IMR-90 (cell line): ENCODE measurements at regions of chr2 and their contacts with region 1.

Region 1: DNA sequence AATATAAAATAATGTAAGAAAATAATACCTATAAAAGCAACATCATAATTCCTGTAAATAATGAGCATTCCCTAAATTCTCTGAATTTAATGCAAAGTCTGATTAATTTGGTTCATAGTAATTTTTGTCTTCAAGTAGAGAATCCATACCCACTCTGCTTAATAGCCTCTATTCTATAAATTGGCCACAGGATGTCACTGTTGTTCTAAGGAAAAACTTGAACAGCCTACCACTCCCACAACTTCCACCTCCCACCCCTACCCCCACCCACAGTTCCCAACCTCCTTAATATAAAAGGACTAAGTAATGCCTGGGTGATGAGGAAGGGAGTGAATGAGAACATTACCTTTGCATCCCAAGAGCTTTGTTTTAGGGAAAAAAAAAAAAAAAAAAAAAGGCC is 27.2 kb upstream of the BBS5 start:
- DNase-seq: peak; percentile 58
- ATAC-seq: peak; percentile 87
- H3K4me3 ChIP-seq: no peak overlapping the region
- H3K27ac ChIP-seq: no peak overlapping the region
- H3K4me1 ChIP-seq: no peaks in the 10 kb centered on the region
- H3K27me3 ChIP-seq: peaks cover 2% of the 10 kb centered on the region; the same call in 1 of the 2 replicates
- CTCF ChIP-seq: peak; percentile 63
- POLR2A ChIP-seq: no peak
- RAD21 ChIP-seq: peak; percentile 76

Region 2: GRCh38 chr2:169415233-169415748 is 36.8 kb before region 1 on chr2:
- CTCF ChIA-PET with region 1: no interaction called
- POLR2A ChIA-PET with region 1: no interaction called
- dilution Hi-C with region 1: no loop called
- in situ Hi-C with region 1: no loop called
- intact Hi-C with region 1: no loop called
- DNase-seq: no peak
- ATAC-seq: no peak
- H3K4me3 ChIP-seq: no peak overlapping the region
- H3K27ac ChIP-seq: no peak overlapping the region
- H3K4me1 ChIP-seq: no peaks in the 10 kb centered on the region
- H3K27me3 ChIP-seq: no peaks in the 10 kb centered on the region; the same call in 1 of the 2 replicates
- CTCF ChIP-seq: no peak
- POLR2A ChIP-seq: no peak
- RAD21 ChIP-seq: no peak

Region 3: GRCh38 chr2:169619946-169620345 is 167.9 kb after region 1 on chr2:
- CTCF ChIA-PET with region 1: no interaction called
- POLR2A ChIA-PET with region 1: no interaction called
- dilution Hi-C with region 1: no loop called
- in situ Hi-C with region 1: no loop called
- intact Hi-C with region 1: no loop called
- DNase-seq: no peak
- ATAC-seq: no peak
- H3K4me3 ChIP-seq: no peak overlapping the region
- H3K27ac ChIP-seq: no peak overlapping the region
- H3K4me1 ChIP-seq: no peaks in the 10 kb centered on the region
- H3K27me3 ChIP-seq: no peaks in the 10 kb centered on the region
- CTCF ChIP-seq: no peak
- POLR2A ChIP-seq: no peak
- RAD21 ChIP-seq: no peak

Region 4: GRCh38 chr2:169824373-169825333 is 372.6 kb after region 1 on chr2 and contains the start of gene METTL5:
- CTCF ChIA-PET with region 1: no interaction called
- POLR2A ChIA-PET with region 1: no interaction called
- dilution Hi-C with region 1: no loop called
- in situ Hi-C with region 1: no loop called
- intact Hi-C with region 1: loop called (anchors 1 kb)
- DNase-seq: peak; percentile 70
- ATAC-seq: peak; percentile 64
- H3K4me3 ChIP-seq: peak within 1 kb of the TSS; percentile 72
- H3K27ac ChIP-seq: peak within 1 kb of the TSS; percentile 88
- H3K4me1 ChIP-seq: peaks cover 4% of the 10 kb centered on the region
- H3K27me3 ChIP-seq: no peaks in the 10 kb centered on the region
- CTCF ChIP-seq: peak; percentile 99
- POLR2A ChIP-seq: no peak
- RAD21 ChIP-seq: peak; percentile 62
- total RNA-seq, gene METTL5: 49.8 and 81.9 TPM in 2 replicates

Region 5: DNA sequence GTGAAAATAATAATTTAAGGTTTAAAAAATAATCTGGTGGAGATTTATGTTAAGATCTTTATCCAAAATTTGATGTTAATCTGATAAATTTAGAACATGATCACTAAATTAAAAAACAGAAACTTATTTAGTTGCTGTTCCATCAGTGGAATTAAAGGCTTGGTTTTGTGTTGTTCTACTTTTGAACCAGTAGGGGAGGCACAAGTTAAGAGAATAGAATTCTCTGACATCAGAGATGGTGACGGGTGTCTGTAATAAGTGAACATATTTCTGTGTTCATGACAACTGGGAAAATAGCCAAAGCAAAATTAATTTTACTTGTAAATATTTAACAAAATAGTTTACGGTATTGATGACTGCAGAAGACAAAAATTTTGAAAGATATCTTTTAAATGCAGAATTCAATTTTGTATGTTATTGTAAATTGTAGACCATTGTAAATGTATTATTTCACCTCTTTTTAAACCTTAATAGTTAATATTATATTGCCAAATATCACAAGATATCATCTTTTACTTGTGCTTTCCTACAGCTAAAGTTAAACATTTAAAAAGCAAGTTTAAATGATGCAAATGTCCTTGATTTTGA is 481.1 kb after region 1 on chr2:
- CTCF ChIA-PET with region 1: no interaction called
- POLR2A ChIA-PET with region 1: no interaction called
- dilution Hi-C with region 1: no loop called
- in situ Hi-C with region 1: no loop called
- intact Hi-C with region 1: loop called (anchors 5 kb)
- DNase-seq: peak; percentile 54
- ATAC-seq: peak; percentile 89
- H3K4me3 ChIP-seq: no peak overlapping the region
- H3K27ac ChIP-seq: no peak overlapping the region
- H3K4me1 ChIP-seq: no peaks in the 10 kb centered on the region
- H3K27me3 ChIP-seq: no peaks in the 10 kb centered on the region
- CTCF ChIP-seq: peak; percentile 75
- POLR2A ChIP-seq: no peak
- RAD21 ChIP-seq: peak; percentile 74

Region 6: DNA sequence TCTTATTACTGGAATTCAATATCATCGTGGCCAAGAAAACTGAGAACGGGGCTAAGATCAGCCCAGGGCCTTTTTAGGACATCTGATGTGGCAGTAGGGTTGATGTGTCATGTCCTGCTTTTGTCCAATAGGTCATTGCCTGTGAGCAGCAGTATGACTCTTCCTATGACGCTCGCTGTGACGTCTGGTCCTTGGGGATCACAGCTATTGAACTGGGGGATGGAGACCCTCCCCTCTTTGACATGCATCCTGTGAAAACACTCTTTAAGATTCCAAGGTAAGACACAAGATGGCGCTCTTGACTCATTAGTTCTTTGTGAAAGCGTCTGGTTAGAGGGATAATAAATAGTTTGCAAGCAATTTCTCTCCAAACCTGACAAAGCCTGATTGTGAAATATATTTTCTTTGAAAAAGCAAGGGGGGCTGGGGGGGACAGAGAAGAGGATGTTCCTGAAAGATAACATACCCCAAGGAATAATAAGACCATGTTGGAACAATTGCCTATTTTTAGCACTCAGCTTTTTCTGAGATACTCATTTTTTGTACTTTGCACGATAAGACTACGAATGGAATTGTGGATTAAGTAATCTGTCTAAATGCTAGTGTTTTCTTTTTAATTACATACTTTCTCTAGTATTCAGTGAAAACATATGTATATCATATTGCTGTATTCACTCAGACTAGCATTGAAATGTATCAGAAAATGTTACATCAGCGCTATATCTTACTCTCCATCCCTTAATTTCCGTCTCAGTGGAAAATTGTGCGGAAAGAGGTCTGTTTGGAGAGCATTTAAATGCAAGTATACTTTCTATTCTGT is 784.0 kb after region 1 on chr2:
- CTCF ChIA-PET with region 1: no interaction called
- POLR2A ChIA-PET with region 1: no interaction called
- dilution Hi-C with region 1: no loop called
- in situ Hi-C with region 1: no loop called
- intact Hi-C with region 1: loop called (anchors 10 kb)
- DNase-seq: peak; percentile 54
- ATAC-seq: peak; percentile 69; the same call in 1 of the 2 replicates
- H3K4me3 ChIP-seq: no peak overlapping the region
- H3K27ac ChIP-seq: no peak overlapping the region
- H3K4me1 ChIP-seq: no peaks in the 10 kb centered on the region
- H3K27me3 ChIP-seq: peaks cover 14% of the 10 kb centered on the region
- CTCF ChIP-seq: peak; percentile 61
- POLR2A ChIP-seq: no peak
- RAD21 ChIP-seq: peak; percentile 64

Region 7: GRCh38 chr2:170409164-170409535 is 957.1 kb after region 1 on chr2:
- CTCF ChIA-PET with region 1: no interaction called
- POLR2A ChIA-PET with region 1: no interaction called
- dilution Hi-C with region 1: no loop called
- in situ Hi-C with region 1: no loop called
- intact Hi-C with region 1: loop called (anchors 5 kb)
- DNase-seq: peak; percentile 61
- ATAC-seq: peak; percentile 62
- H3K4me3 ChIP-seq: no peak overlapping the region
- H3K27ac ChIP-seq: no peak overlapping the region
- H3K4me1 ChIP-seq: no peaks in the 10 kb centered on the region
- H3K27me3 ChIP-seq: no peaks in the 10 kb centered on the region; the same call in 1 of the 2 replicates
- CTCF ChIP-seq: peak; percentile 76
- POLR2A ChIP-seq: no peak
- RAD21 ChIP-seq: peak; percentile 66